ENCODE measurements at regions of chr5 and their contacts with region 1.

Region 1: GRCh38 chr5:159058716-159059636 is 40.7 kb downstream of the EBF1 start:
- DNase-seq: no peak
- H3K4me3 ChIP-seq: peak overlapping the region in 1 of 2 donors; percentile 15
- H3K27ac ChIP-seq: peak overlapping the region; percentile 87 to 90
- H3K4me1 ChIP-seq: peaks cover 3 to 60% of the 10 kb centered on the region in 2 donors
- H3K27me3 ChIP-seq: no peaks in the 10 kb centered on the region
- CTCF ChIP-seq: no peak

Region 2: DNA sequence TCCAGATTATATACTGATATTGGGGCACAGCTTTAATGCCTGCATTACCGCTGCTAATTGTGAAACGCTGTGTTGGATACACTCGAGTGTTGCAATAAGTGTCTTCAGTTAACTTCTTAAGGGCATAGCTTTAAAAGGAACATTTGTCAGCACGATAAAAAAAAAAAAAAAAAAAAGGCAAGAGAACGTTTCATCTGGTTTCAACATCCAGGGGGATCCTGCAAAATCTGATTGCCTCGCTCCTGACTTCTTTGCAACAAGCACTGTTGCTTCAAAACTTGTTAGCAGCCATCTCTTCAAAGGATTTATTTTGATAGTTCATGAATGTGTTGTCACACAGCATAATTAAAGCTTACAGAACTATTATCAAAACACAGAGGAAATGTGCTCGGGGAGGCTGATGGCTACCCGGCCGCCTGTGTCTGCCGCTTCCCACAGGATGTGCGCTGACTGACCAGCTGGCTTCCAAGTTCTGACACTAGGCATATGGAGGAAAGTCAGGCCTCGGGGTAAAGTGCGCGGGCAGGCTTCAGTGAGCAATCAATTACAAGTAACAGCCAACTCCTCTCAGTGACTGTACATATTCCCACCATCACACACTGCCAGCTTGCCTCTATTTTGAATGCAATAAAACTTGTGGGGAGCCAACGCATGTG is 36.9 kb before region 1 on chr5:
- intact Hi-C with region 1: loop called (anchors 1 kb)
- DNase-seq: peak in 1 of 2 donors; percentile 73
- H3K4me3 ChIP-seq: peak overlapping the region in 1 of 2 donors; percentile 22
- H3K27ac ChIP-seq: peak overlapping the region; percentile 8 to 41
- H3K4me1 ChIP-seq: peaks cover 0 to 13% of the 10 kb centered on the region in 2 donors
- H3K27me3 ChIP-seq: no peaks in the 10 kb centered on the region
- CTCF ChIP-seq: no peak

Region 3: GRCh38 chr5:159094745-159095144 is 35.8 kb after region 1 on chr5:
- intact Hi-C with region 1: loop called (anchors 2 kb)
- DNase-seq: peak in 1 of 2 donors; percentile 94
- H3K4me3 ChIP-seq: peak overlapping the region; percentile 70 to 77
- H3K27ac ChIP-seq: peak overlapping the region; percentile 94 to 97
- H3K4me1 ChIP-seq: peaks cover 0 to 10% of the 10 kb centered on the region in 2 donors
- H3K27me3 ChIP-seq: no peaks in the 10 kb centered on the region
- CTCF ChIP-seq: no peak